Heart left ventricle (tissue), 16 donors: ENCODE measurements at regions of chr16 and their contacts with region 1.

Region 1: DNA sequence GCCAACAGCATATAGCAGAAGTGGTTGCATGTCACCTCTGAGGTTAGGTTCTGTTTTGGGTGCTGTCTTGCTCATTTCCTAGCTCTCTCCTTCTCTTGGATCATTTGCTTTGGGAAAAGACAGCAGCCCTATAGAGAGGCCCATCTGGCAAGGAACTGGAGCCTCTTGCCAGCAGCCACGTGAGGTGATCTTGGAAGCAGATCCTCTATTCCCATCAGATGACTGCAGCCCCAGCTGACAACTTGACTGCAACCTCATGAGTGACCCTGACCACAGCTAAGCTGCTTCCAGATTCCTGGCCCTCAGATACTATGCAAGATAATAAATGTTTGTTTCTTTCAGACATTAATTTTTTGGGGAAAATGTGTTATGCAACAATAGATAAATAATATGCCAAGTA is 213.3 kb upstream of the HS3ST4 start:
- DNase-seq: no peak
- ATAC-seq: no peak
- H3K4me3 ChIP-seq: no peak overlapping the region
- H3K27ac ChIP-seq: no peak overlapping the region
- H3K4me1 ChIP-seq: no peaks in the 10 kb centered on the region
- H3K27me3 ChIP-seq: no peaks in the 10 kb centered on the region
- CTCF ChIP-seq: no peak
- POLR2A ChIP-seq: no peak

Region 2: GRCh38 chr16:25413985-25414384 is 64.5 kb before region 1 on chr16:
- intact Hi-C with region 1: loop called in 1 of 10 experiments (anchors 10 kb)
- DNase-seq: no peak
- ATAC-seq: no peak
- H3K4me3 ChIP-seq: no peak overlapping the region
- H3K27ac ChIP-seq: no peak overlapping the region
- H3K4me1 ChIP-seq: no peaks in the 10 kb centered on the region
- H3K27me3 ChIP-seq: no peaks in the 10 kb centered on the region
- CTCF ChIP-seq: no peak
- POLR2A ChIP-seq: no peak